Activated naive CD4-positive, alpha-beta T cell treated with anti-CD3 and anti-CD28 coated beads, Interleukin-2, amount 10 ng/mL, durations not matched to agents 7 days and 5 days (primary cell): ENCODE measurements at regions of chr22 and their contacts with region 1.

Region 1: GRCh38 chr22:45577746-45578523 is 75.3 kb downstream of the FBLN1 start:
- DNase-seq: peak; percentile 84
- H3K4me3 Mint-ChIP-seq: no peak overlapping the region
- H3K27ac Mint-ChIP-seq: no peak overlapping the region
- H3K4me1 Mint-ChIP-seq: peaks cover 2% of the 10 kb centered on the region
- H3K27me3 Mint-ChIP-seq: peaks cover 6% of the 10 kb centered on the region

Region 2: GRCh38 chr22:45502215-45503049 is 75.5 kb before region 1 on chr22 and contains the start of gene FBLN1:
- CTCF ChIA-PET with region 1: no interaction called
- DNase-seq: no peak
- H3K4me3 Mint-ChIP-seq: no peak within 1 kb of the TSS
- H3K27ac Mint-ChIP-seq: no peak within 1 kb of the TSS
- H3K4me1 Mint-ChIP-seq: peaks cover 2% of the 10 kb centered on the region
- H3K27me3 Mint-ChIP-seq: peaks cover 79% of the 10 kb centered on the region

Region 3: DNA sequence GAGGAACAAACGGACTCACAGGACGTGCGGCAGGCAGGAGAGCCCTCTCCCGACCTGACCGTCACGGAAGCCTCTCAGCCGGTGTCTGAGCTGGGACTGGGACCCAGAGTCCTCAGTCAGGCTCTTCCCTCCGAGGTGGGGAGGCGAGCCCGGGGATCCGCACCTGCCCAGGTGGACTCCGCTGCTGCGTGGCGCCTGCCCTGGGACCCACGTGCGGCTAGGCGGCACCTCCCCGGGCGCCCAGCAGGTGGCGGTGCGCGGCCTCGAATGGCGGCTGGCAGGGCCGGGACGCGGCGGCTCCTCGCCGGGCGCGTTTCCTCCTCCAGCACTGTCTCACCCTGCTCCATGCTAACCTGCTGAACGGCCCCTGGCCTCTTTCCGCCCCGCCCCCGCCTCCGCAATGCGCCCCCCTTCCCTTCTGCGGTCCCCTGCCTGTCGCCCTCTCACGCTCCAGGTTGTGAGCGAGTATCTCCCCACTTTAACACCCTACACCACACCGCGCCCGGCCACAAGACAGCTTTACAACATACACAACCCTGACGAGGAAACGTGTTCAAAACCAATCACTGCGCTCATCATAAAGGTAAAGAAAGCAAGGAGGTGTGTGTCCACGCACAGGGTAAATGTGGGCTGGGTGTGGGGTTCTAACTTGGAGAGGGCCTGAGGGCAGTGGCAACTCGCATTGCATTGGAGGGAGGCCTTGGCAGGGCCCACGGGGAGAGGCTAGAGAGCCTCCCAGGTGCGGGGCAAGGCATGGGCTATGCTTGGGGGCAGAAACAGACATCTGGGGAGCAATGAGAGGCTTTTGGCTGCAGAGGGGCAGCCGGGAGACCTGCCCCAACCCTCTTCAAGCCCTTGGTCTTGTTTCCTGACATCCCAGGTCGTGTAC is 67.8 kb after region 1 on chr22:
- CTCF ChIA-PET with region 1: interaction called, 10 read pairs
- DNase-seq: peak; percentile 78
- H3K4me3 Mint-ChIP-seq: no peak overlapping the region
- H3K27ac Mint-ChIP-seq: no peak overlapping the region
- H3K4me1 Mint-ChIP-seq: peaks cover 10% of the 10 kb centered on the region
- H3K27me3 Mint-ChIP-seq: peaks cover 83% of the 10 kb centered on the region

Region 4: GRCh38 chr22:45799291-45799690 is 221.4 kb after region 1 on chr22:
- CTCF ChIA-PET with region 1: no interaction called
- DNase-seq: no peak
- H3K4me3 Mint-ChIP-seq: no peak overlapping the region
- H3K27ac Mint-ChIP-seq: no peak overlapping the region
- H3K4me1 Mint-ChIP-seq: no peaks in the 10 kb centered on the region
- H3K27me3 Mint-ChIP-seq: no peaks in the 10 kb centered on the region

Region 5: GRCh38 chr22:45863981-45864751 is 286.2 kb after region 1 on chr22:
- CTCF ChIA-PET with region 1: interaction called, 12 read pairs
- DNase-seq: peak; percentile 80
- H3K4me3 Mint-ChIP-seq: no peak overlapping the region
- H3K27ac Mint-ChIP-seq: no peak overlapping the region
- H3K4me1 Mint-ChIP-seq: peaks cover 2% of the 10 kb centered on the region
- H3K27me3 Mint-ChIP-seq: peaks cover 67% of the 10 kb centered on the region